Aorta (tissue), 5 donors: ENCODE measurements at regions of chr2 and their contacts with region 1.

Region 1: DNA sequence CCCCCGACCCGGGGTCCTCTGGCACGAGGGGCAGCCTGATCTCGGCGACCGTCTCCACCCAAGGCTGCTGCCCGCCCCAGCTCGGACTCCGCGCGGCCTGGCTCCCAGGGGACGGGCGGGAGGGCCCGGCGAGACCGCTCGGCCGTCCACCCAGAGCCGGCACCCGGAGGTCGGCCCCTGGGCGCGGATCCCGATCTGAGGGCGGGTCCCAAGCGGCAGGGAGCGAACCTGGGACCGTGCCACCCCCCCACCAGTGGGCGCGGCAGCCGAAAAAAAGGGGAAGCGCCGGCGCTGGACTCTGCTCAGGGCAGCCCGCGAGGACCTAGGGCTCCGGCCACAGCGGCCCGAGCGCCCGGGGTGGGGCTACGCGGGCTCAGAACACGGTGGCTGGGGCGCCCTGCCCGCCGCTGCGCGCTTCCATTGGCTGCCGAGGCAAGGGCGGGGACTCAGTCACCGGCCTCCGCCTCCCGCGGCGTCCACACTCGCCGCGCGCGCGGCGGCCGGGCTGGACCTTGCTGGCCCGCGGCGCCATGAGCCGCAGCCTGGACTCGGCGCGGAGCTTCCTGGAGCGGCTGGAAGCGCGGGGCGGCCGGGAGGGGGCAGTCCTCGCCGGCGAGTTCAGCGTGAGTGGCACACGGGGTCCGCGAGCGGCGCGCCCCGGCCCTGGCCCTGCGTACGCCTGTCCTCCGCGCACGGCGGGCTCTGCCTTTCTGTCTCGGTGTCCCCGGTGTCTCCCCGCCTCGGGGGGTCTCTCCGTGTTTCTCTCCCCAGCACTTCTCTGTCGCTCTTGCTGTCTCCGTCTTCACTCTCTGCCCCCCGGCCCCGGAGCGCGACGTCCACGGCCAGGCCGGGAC is at the start of gene PTPN18:
- DNase-seq: peak; percentile 95 to 97
- ATAC-seq: peak; percentile 98
- H3K4me3 ChIP-seq: peak within 1 kb of the TSS; percentile 37 to 58
- H3K27ac ChIP-seq: no peak within 1 kb of the TSS
- H3K4me1 ChIP-seq: no peaks in the 10 kb centered on the region
- H3K27me3 ChIP-seq: no peaks in the 10 kb centered on the region
- total RNA-seq, gene PTPN18: 37.3 to 71.0 TPM

Region 2: GRCh38 chr2:130181325-130181879 is 174.4 kb before region 1 on chr2 and contains the start of gene SMPD4:
- intact Hi-C with region 1: no loop called
- DNase-seq: peak; percentile 99 to 100
- ATAC-seq: peak; percentile 98
- H3K4me3 ChIP-seq: peak within 1 kb of the TSS; percentile 77 to 92
- H3K27ac ChIP-seq: peak within 1 kb of the TSS; percentile 22 to 57
- H3K4me1 ChIP-seq: no peaks in the 10 kb centered on the region
- H3K27me3 ChIP-seq: no peaks in the 10 kb centered on the region
- total RNA-seq, gene SMPD4: 32.3 to 37.4 TPM

Region 3: GRCh38 chr2:130327703-130328527 is 27.9 kb before region 1 on chr2:
- intact Hi-C with region 1: no loop called
- DNase-seq: no peak
- ATAC-seq: no peak
- H3K4me3 ChIP-seq: no peak overlapping the region
- H3K27ac ChIP-seq: no peak overlapping the region
- H3K4me1 ChIP-seq: no peaks in the 10 kb centered on the region
- H3K27me3 ChIP-seq: no peaks in the 10 kb centered on the region

Region 4: DNA sequence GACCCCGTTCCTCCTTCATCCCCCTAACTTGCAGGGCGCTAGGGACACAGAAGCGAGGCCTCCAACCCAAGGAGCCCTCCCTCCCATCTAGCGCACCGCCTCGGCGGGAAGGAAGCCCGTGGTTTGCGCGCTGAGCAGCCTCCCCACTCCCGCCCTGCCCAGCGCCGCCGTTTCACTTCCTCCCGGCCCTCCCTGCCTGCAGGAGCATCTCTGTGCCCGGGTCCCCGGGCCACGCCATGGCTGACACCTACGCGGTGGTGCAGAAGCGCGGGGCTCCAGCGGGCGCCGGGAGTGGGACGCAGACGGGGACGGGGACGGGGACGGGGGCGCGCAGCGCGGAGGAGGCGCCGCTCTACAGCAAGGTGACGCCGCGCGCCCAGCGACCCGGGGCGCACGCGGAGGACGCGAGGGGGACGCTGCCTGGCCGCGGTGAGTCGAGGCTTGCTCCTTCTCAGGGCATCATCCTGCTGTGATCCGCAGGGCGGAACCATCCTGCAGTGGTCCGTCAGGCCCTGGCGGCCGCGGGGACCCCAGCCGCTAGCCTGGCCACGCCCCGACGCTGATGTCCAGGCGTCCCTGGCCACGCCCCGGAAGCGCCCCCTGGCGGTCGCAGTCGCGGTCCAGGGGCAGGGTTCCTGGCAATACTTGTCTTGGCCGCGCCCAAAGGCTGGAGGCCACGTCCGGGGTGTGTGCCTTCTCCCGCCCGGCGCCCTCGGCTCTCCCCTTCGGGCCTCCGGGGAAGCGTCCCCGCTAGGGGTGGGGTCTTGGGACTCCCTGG is 16.4 kb after region 1 on chr2:
- intact Hi-C with region 1: loop called (anchors 2 kb)
- DNase-seq: peak; percentile 94 to 97
- ATAC-seq: peak; percentile 96
- H3K4me3 ChIP-seq: peak overlapping the region; percentile 58 to 91
- H3K27ac ChIP-seq: peak overlapping the region; percentile 6 to 54
- H3K4me1 ChIP-seq: no peaks in the 10 kb centered on the region
- H3K27me3 ChIP-seq: no peaks in the 10 kb centered on the region